Activated naive CD4-positive, alpha-beta T cell treated with anti-CD3 and anti-CD28 coated beads, Interleukin-2, amount 10 ng/mL, durations not matched to agents 7 days and 5 days (primary cell): ENCODE measurements at regions of chr17 and their contacts with region 1.

Region 1: GRCh38 chr17:47733047-47733673 is at the start of gene TBX21:
- DNase-seq: peak; percentile 94
- H3K4me3 Mint-ChIP-seq: peak within 1 kb of the TSS; percentile 96
- H3K27ac Mint-ChIP-seq: peak within 1 kb of the TSS; percentile 93
- H3K4me1 Mint-ChIP-seq: peaks cover 76% of the 10 kb centered on the region
- H3K27me3 Mint-ChIP-seq: peaks cover 7% of the 10 kb centered on the region

Region 2: GRCh38 chr17:47685556-47686275 is 47.4 kb before region 1 on chr17:
- CTCF ChIA-PET with region 1: no interaction called
- DNase-seq: no peak
- H3K4me3 Mint-ChIP-seq: no peak overlapping the region
- H3K27ac Mint-ChIP-seq: peak overlapping the region; percentile 49
- H3K4me1 Mint-ChIP-seq: peaks cover 8% of the 10 kb centered on the region
- H3K27me3 Mint-ChIP-seq: no peaks in the 10 kb centered on the region

Region 3: GRCh38 chr17:47717261-47717697 is 15.9 kb before region 1 on chr17:
- CTCF ChIA-PET with region 1: interaction called, 22 read pairs
- DNase-seq: peak; percentile 51
- H3K4me3 Mint-ChIP-seq: no peak overlapping the region
- H3K27ac Mint-ChIP-seq: peak overlapping the region; percentile 40
- H3K4me1 Mint-ChIP-seq: peaks cover 86% of the 10 kb centered on the region
- H3K27me3 Mint-ChIP-seq: peaks cover 47% of the 10 kb centered on the region